ENCODE measurements at regions of chr15 and their contacts with region 1.

Region 1: GRCh38 chr15:52679232-52680040 is at the start of gene ATOSA:
- DNase-seq: peak; percentile 76 to 91
- H3K4me3 ChIP-seq: peak within 1 kb of the TSS; percentile 89
- H3K27ac ChIP-seq: peak within 1 kb of the TSS; percentile 60
- H3K4me1 ChIP-seq: peaks cover 54% of the 10 kb centered on the region
- H3K27me3 ChIP-seq: no peaks in the 10 kb centered on the region
- CTCF ChIP-seq: no peak
- total RNA-seq, gene ATOSA: 30.4 and 35.7 TPM in 2 replicates

Region 2: GRCh38 chr15:52261498-52262242 is 417.8 kb before region 1 on chr15:
- CTCF ChIA-PET with region 1: no interaction called
- POLR2A ChIA-PET with region 1: no interaction called
- intact Hi-C with region 1: loop called (anchors 1 kb)
- DNase-seq: peak; percentile 90 to 95
- H3K4me3 ChIP-seq: 0 out of 2 replicates have a peak overlapping the region, but pooled peaks have one; percentile 17
- H3K27ac ChIP-seq: peak overlapping the region; percentile 95
- H3K4me1 ChIP-seq: peaks cover 26% of the 10 kb centered on the region
- H3K27me3 ChIP-seq: no peaks in the 10 kb centered on the region
- CTCF ChIP-seq: 0 out of 2 replicates have a peak, but pooled peaks have one; percentile 26

Region 3: DNA sequence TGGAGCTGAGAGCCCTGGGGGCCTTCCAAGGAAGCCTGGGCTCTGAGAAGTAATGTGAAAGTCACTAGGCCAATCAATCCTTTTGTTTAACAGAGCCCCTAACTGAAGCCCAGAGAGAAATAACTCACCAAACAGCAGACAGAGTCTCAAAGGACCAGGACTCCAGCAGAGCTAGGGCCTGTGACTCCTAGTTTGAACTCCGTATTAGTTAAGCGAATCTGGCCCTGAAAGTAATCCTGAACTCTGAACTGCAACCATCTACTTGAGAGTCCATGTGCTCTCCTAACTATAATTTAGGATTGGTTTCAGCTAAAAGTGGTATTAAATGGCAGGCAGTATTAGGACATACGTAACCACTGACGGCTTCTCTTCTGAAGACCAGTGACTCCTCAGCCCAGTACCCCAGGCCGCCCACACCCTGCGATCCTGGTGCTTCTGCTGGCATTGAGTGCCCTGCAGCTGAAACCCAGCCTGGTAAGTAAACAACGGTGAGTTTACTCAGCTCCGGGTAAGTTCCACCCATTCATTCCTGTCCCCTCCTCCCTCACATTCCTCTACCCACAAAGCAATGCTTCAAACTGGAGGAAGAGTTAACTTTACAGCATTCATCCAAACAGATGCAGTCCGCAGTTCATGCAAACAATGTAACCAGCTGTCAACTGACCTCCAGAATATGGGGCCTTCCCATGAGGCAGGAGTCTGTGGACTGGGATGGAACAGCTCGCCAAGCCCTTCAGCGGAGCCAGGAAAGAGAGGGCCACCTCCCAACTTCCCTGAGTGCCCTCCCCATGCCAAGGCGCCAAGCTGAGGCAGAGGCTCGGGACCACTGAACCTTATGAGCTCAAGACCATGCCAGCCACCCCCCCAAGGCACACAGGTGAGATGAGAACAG is 391.1 kb before region 1 on chr15:
- CTCF ChIA-PET with region 1: no interaction called
- POLR2A ChIA-PET with region 1: interaction called, 3 read pairs
- intact Hi-C with region 1: loop called (anchors 1 kb)
- DNase-seq: peak; percentile 90 to 93
- H3K4me3 ChIP-seq: peak overlapping the region; percentile 42; the same call in 1 of the 2 replicates
- H3K27ac ChIP-seq: peak overlapping the region; percentile 93
- H3K4me1 ChIP-seq: peaks cover 45% of the 10 kb centered on the region
- H3K27me3 ChIP-seq: no peaks in the 10 kb centered on the region
- CTCF ChIP-seq: no peak

Region 4: GRCh38 chr15:52540374-52541012 is 138.9 kb before region 1 on chr15:
- CTCF ChIA-PET with region 1: no interaction called
- POLR2A ChIA-PET with region 1: no interaction called
- intact Hi-C with region 1: no loop called
- DNase-seq: no peak
- H3K4me3 ChIP-seq: no peak overlapping the region
- H3K27ac ChIP-seq: no peak overlapping the region
- H3K4me1 ChIP-seq: no peaks in the 10 kb centered on the region
- H3K27me3 ChIP-seq: no peaks in the 10 kb centered on the region
- CTCF ChIP-seq: no peak

Region 5: GRCh38 chr15:52568601-52569256 is 110.7 kb before region 1 on chr15 and contains the start of gene ARPP19:
- CTCF ChIA-PET with region 1: no interaction called
- POLR2A ChIA-PET with region 1: no interaction called
- intact Hi-C with region 1: loop called (anchors 2 kb)
- DNase-seq: peak; percentile 77 to 88
- H3K4me3 ChIP-seq: peak within 1 kb of the TSS; percentile 94
- H3K27ac ChIP-seq: peak within 1 kb of the TSS; percentile 84
- H3K4me1 ChIP-seq: peaks cover 15% of the 10 kb centered on the region
- H3K27me3 ChIP-seq: no peaks in the 10 kb centered on the region
- CTCF ChIP-seq: no peak
- total RNA-seq, gene ARPP19: 108 and 119 TPM in 2 replicates

Region 6: GRCh38 chr15:52653513-52654003 is 25.9 kb before region 1 on chr15:
- CTCF ChIA-PET with region 1: no interaction called
- POLR2A ChIA-PET with region 1: interaction called, 4 read pairs
- intact Hi-C with region 1: loop called (anchors 1 kb)
- DNase-seq: peak; percentile 37 to 70
- H3K4me3 ChIP-seq: no peak overlapping the region
- H3K27ac ChIP-seq: peak overlapping the region; percentile 31
- H3K4me1 ChIP-seq: peaks cover 13% of the 10 kb centered on the region
- H3K27me3 ChIP-seq: no peaks in the 10 kb centered on the region
- CTCF ChIP-seq: no peak

Region 7: GRCh38 chr15:52730173-52730572 is 50.7 kb after region 1 on chr15:
- CTCF ChIA-PET with region 1: interaction called, 4 read pairs
- POLR2A ChIA-PET with region 1: interaction called, 3 read pairs
- intact Hi-C with region 1: loop called (anchors 1 kb)
- DNase-seq: peak; percentile 37 to 67
- H3K4me3 ChIP-seq: no peak overlapping the region
- H3K27ac ChIP-seq: no peak overlapping the region
- H3K4me1 ChIP-seq: peaks cover 16% of the 10 kb centered on the region
- H3K27me3 ChIP-seq: no peaks in the 10 kb centered on the region
- CTCF ChIP-seq: no peak

Region 8: GRCh38 chr15:52735231-52736089 is 56.0 kb after region 1 on chr15:
- CTCF ChIA-PET with region 1: interaction called, 12 read pairs
- POLR2A ChIA-PET with region 1: interaction called, 3 read pairs
- intact Hi-C with region 1: loop called (anchors 1 kb)
- DNase-seq: peak; percentile 68 to 69
- H3K4me3 ChIP-seq: no peak overlapping the region
- H3K27ac ChIP-seq: no peak overlapping the region
- H3K4me1 ChIP-seq: peaks cover 13% of the 10 kb centered on the region
- H3K27me3 ChIP-seq: no peaks in the 10 kb centered on the region
- CTCF ChIP-seq: peak; percentile 84